Activated CD4-positive, alpha-beta T cell treated with anti-CD3 and anti-CD28 coated beads, Interleukin-2, amount 10 ng/mL, durations not matched to agents 24 days and 14 days (primary cell): ENCODE measurements at regions of chr9 and their contacts with region 1.

Region 1: GRCh38 chr9:132768932-132769905 is 99.0 kb downstream of the GTF3C4 start:
- DNase-seq: peak; percentile 88
- H3K4me3 Mint-ChIP-seq: peak overlapping the region; percentile 98
- H3K27ac Mint-ChIP-seq: peak overlapping the region; percentile 99
- H3K4me1 Mint-ChIP-seq: peaks cover 24% of the 10 kb centered on the region
- H3K27me3 Mint-ChIP-seq: peaks cover 22% of the 10 kb centered on the region

Region 2: GRCh38 chr9:132780230-132781007 is 11.2 kb after region 1 on chr9:
- intact Hi-C with region 1: loop called (anchors 1 kb)
- DNase-seq: no peak
- H3K4me3 Mint-ChIP-seq: peak overlapping the region; percentile 54
- H3K27ac Mint-ChIP-seq: peak overlapping the region; percentile 81
- H3K4me1 Mint-ChIP-seq: peaks cover 15% of the 10 kb centered on the region
- H3K27me3 Mint-ChIP-seq: peaks cover 21% of the 10 kb centered on the region

Region 3: GRCh38 chr9:132800038-132800648 is 30.9 kb after region 1 on chr9:
- intact Hi-C with region 1: loop called (anchors 2 kb)
- DNase-seq: peak; percentile 87
- H3K4me3 Mint-ChIP-seq: no peak overlapping the region
- H3K27ac Mint-ChIP-seq: no peak overlapping the region
- H3K4me1 Mint-ChIP-seq: peaks cover 4% of the 10 kb centered on the region
- H3K27me3 Mint-ChIP-seq: peaks cover 30% of the 10 kb centered on the region